Mammary epithelial cell (primary cell): ENCODE measurements at regions of chr2 and their contacts with region 1.

Region 1: DNA sequence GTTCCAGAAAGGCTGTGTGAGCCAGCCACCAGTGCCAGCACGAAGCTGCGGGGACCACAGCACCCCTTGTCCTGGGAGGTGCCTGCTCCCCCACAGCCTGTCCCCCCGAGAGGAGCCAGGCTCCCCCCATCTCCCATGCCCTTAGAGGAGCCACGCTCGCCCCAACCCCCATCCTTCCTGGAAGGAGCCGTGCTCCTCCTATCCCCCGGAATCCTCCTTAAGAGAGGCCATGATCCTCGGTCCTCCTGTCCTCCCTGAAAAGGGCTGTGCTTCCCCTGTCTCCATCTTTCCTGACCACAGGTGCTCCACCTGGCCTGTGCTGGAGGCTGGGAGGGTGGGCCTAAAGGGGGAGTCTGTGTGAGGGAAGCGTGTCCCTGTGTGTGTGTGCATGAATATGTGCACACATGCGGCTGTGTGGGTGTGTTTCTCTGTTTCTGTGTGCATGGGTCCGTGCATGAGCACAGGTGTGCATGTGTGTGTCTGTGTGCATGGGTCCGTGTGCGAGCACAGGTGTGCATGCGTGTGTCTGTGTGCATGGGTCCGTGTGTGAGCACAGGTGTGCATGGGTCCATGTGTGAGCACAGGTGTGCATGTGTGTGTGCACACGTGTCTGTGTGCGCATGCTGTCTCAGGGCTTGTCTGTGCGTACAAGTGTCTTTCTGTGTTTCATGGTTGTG is 80.3 kb downstream of the RTP5 start:
- DNase-seq: no peak
- H3K4me3 ChIP-seq: no peak overlapping the region
- H3K27ac ChIP-seq: no peak overlapping the region
- H3K4me1 ChIP-seq: no peaks in the 10 kb centered on the region
- H3K27me3 ChIP-seq: peaks cover 4% of the 10 kb centered on the region
- CTCF ChIP-seq: no peak

Region 2: GRCh38 chr2:241982706-241983570 is 33.1 kb after region 1 on chr2:
- CTCF ChIA-PET with region 1: no interaction called
- dilution Hi-C with region 1: loop called (anchors 5 kb)
- in situ Hi-C with region 1: no loop called
- intact Hi-C with region 1: no loop called
- DNase-seq: no peak
- H3K4me3 ChIP-seq: no peak overlapping the region
- H3K27ac ChIP-seq: no peak overlapping the region
- H3K4me1 ChIP-seq: peaks cover 2% of the 10 kb centered on the region
- H3K27me3 ChIP-seq: no peaks in the 10 kb centered on the region
- CTCF ChIP-seq: no peak